Activated B cell treated with CpG ODN at 0.5 μM for 24 hours (primary cell): ENCODE measurements at regions of chr10 and their contacts with region 1.

Region 1: GRCh38 chr10:102480396-102480795 is 22.1 kb downstream of the ACTR1A start:
- DNase-seq: no peak
- ATAC-seq: no peak
- H3K4me3 Mint-ChIP-seq: no peak overlapping the region
- H3K27ac Mint-ChIP-seq: no peak overlapping the region
- H3K4me1 Mint-ChIP-seq: peaks cover 7% of the 10 kb centered on the region
- H3K27me3 Mint-ChIP-seq: no peaks in the 10 kb centered on the region
- CTCF ChIP-seq: no peak

Region 2: DNA sequence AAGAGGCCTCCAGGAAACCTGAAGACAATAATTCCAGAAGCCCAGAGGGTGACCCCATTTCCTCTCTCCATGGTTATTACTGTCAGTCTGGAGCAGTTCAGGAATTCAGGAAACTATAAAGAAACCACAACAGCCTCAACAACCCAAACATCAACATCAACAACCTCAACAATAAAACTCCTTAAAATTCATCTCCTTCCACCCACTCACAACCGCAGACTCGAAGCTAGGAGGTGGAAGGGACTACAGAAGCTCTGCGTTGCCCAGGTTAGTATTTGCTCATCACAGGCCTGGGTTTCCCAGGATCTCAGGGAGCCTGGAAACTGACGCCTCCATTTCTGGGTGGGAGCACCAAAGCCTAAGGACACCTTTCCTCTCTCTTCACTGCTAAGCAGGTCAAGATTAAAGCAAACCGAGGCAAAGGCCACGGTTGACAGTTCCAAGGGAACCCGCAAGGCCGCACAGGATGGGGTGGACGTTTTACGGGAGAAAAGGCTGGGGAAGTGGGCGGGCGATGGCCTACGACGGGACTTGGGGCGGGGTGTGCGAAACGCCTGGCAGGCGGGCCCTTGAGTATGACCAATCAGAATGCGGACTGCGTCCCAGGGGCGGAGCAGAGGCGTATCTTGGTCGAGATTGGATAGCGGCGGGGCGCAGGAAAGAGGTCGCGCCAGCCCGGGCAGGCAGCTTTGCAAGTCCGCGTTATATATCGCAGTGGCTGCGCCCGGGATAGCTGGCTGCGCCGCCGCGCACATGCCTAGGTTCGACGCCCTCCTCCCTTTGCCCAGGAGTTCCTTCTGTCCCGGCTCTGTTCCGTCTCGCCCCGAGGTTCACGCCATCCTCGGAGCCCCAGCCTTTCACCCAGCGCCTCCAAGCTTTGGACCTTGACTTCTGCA is 254.5 kb before region 1 on chr10 and contains the start of gene ELOVL3:
- CTCF ChIA-PET with region 1: interaction called, 33 read pairs
- POLR2A ChIA-PET with region 1: no interaction called
- intact Hi-C with region 1: loop called (anchors 1 kb)
- DNase-seq: peak; percentile 69
- ATAC-seq: peak; percentile 94
- H3K4me3 Mint-ChIP-seq: peak within 1 kb of the TSS; percentile 71
- H3K27ac Mint-ChIP-seq: no peak within 1 kb of the TSS
- H3K4me1 Mint-ChIP-seq: peaks cover 19% of the 10 kb centered on the region
- H3K27me3 Mint-ChIP-seq: peaks cover 59% of the 10 kb centered on the region
- CTCF ChIP-seq: no peak
- total RNA-seq, gene ELOVL3: not detected in 2 replicates

Region 3: GRCh38 chr10:102352066-102352715 is 128.2 kb before region 1 on chr10:
- CTCF ChIA-PET with region 1: interaction called, 7 read pairs
- POLR2A ChIA-PET with region 1: no interaction called
- intact Hi-C with region 1: loop called (anchors 1 kb)
- DNase-seq: peak; percentile 45
- ATAC-seq: peak; percentile 70
- H3K4me3 Mint-ChIP-seq: no peak overlapping the region
- H3K27ac Mint-ChIP-seq: no peak overlapping the region
- H3K4me1 Mint-ChIP-seq: no peaks in the 10 kb centered on the region
- H3K27me3 Mint-ChIP-seq: no peaks in the 10 kb centered on the region
- CTCF ChIP-seq: peak; percentile 81

Region 4: DNA sequence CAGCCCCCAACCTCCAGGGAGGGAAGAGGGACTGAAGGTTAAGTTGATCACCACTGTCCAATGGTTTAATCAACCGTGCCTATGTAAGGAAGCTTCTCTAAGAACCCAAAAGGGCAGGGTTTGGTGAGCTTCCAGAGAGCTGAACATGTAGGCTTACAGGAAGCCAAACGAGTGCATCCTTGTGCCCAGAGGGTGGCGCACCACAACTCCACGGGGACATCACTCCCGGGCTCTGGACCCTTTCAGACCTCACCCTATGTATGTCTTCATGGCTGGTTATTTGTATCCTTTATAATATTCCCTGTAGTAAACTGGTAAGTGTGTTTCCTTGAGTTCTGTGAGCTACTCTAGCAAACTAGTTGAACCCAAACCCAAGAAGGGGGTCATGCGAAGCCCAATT is 96.3 kb before region 1 on chr10:
- CTCF ChIA-PET with region 1: interaction called, 21 read pairs
- POLR2A ChIA-PET with region 1: interaction called, 11 read pairs
- intact Hi-C with region 1: loop called (anchors 2 kb)
- DNase-seq: no peak
- ATAC-seq: peak; percentile 28
- H3K4me3 Mint-ChIP-seq: no peak overlapping the region
- H3K27ac Mint-ChIP-seq: peak overlapping the region; percentile 50
- H3K4me1 Mint-ChIP-seq: peaks cover 18% of the 10 kb centered on the region
- H3K27me3 Mint-ChIP-seq: no peaks in the 10 kb centered on the region
- CTCF ChIP-seq: no peak

Region 5: GRCh38 chr10:102502336-102503280 is 22.2 kb after region 1 on chr10 and contains the start of gene ACTR1A:
- CTCF ChIA-PET with region 1: no interaction called
- POLR2A ChIA-PET with region 1: no interaction called
- intact Hi-C with region 1: no loop called
- DNase-seq: peak; percentile 90
- ATAC-seq: peak; percentile 41
- H3K4me3 Mint-ChIP-seq: no peak within 1 kb of the TSS
- H3K27ac Mint-ChIP-seq: no peak within 1 kb of the TSS
- H3K4me1 Mint-ChIP-seq: peaks cover 23% of the 10 kb centered on the region
- H3K27me3 Mint-ChIP-seq: no peaks in the 10 kb centered on the region
- CTCF ChIP-seq: no peak
- total RNA-seq, gene ACTR1A: 55.1 and 71.9 TPM in 2 replicates